GM18951 (cell line): ENCODE measurements at regions of chr7 and their contacts with region 1.

Region 1: GRCh38 chr7:120725376-120726039 is 132.4 kb downstream of the TSPAN12 start:
- POLR2A ChIP-seq: no peak

Region 2: GRCh38 chr7:119270045-119270464 is 1455.5 kb before region 1 on chr7:
- in situ Hi-C with region 1: loop called (anchors 25 kb)
- POLR2A ChIP-seq: no peak

Region 3: DNA sequence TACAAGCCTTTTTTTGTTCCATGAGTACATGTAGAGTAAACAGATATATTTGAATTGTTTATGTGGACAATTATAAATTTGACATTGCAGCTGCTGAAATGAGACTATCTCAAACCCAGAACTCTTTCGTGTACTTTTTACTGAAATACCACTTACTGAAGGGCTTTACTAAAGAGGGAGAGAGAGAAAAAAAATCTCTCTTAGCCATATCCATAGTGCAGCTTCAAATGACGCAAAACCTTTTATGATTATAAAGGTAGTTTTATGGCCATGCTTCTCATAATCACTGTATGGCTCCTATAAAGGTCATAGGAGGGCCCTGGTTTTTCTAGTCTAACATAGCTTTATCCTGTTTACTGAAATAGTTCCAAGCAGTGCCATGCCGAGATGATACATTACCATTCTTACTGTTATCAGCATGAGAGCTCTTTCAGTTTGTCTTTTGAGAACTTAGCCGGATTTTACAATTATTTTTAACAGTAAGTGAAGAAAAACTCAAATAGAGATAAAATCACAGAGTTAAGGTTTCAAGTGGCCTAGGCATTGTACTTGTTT is 417.4 kb before region 1 on chr7:
- in situ Hi-C with region 1: no loop called
- POLR2A ChIP-seq: no peak